ENCODE measurements at regions of chr3 and their contacts with region 1.

Region 1: DNA sequence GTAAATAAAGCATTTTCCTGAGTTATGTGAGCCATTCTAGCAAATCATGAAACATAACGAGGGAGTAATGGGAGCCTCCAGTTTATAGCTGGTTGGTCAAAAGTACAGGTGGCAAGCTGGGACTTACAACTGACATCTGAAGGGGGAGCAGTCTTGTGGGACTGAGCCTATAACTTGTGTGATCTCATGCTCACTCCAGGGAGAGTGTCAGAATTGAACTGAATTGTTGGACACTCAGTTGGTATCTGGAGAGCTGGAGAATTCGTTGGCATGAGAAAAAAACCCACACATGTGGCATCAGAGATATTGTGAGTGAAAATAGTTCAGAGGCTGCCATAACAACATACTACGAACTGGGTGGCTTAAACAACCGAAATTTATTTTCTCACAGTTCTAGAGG is 22.8 kb upstream of the DENND6A start:
- DNase-seq: no peak
- H3K4me3 ChIP-seq: no peak overlapping the region
- H3K27me3 ChIP-seq: no peaks in the 10 kb centered on the region
- CTCF ChIP-seq: no peak

Region 2: GRCh38 chr3:57555738-57556458 is 159.8 kb before region 1 on chr3 and contains the start of gene PDE12:
- CTCF ChIA-PET with region 1: no interaction called
- POLR2A ChIA-PET with region 1: interaction called, 15 read pairs
- DNase-seq: peak; percentile 55
- H3K4me3 ChIP-seq: peak within 1 kb of the TSS; percentile 77
- H3K27me3 ChIP-seq: no peaks in the 10 kb centered on the region
- CTCF ChIP-seq: no peak
- polyA plus RNA-seq, gene PDE12: 9.6 and 10.4 TPM in 2 replicates

Measured in BJ (cell line).